IMR-90 (cell line): ENCODE measurements at regions of chr12 and their contacts with region 1.

Region 1: DNA sequence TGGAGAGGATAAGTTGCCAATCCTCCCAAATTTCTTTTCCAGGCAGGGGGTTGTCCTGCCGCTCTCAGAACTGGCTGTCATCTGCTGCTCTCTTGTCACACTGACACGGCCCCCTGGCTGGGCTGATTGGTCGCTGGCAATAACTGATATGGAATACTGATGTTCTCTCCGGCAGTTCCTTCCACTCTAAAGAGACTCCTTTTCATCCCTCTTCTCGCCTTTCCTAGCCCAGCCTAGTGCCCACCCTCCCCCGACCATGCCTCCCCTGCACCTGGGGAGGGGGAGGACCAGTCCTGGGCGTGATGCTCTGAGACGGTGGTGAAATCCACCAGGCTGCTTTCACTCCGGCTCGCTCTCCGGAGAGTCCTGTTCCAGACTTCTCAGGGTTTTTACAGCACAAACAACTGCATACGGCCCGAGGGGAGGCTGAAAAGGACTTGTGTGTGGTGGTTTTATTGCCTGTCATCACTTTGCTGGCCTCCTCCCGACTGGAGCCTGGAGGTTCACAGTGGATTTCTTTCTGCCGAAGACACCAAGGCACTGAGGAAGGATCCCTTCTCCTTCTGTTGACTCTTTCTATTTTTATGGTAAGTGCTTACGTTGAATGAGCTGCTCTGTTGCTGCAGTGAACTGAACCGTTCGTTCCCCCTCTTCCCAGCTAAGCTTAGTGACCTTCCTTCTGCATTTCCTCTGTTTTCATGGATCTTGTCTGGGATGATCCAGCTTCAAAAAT is at the start of gene ANO4:
- DNase-seq: peak; percentile 29
- ATAC-seq: peak; percentile 56
- H3K4me3 ChIP-seq: peak within 1 kb of the TSS; percentile 49
- H3K27ac ChIP-seq: peak within 1 kb of the TSS; percentile 95
- H3K4me1 ChIP-seq: peaks cover 11% of the 10 kb centered on the region
- H3K27me3 ChIP-seq: no peaks in the 10 kb centered on the region
- CTCF ChIP-seq: no peak
- POLR2A ChIP-seq: no peak
- RAD21 ChIP-seq: no peak
- total RNA-seq, gene ANO4: 7.2 and 10.2 TPM in 2 replicates

Region 2: GRCh38 chr12:100573292-100574186 is 221.1 kb before region 1 on chr12 and contains the start of gene GAS2L3:
- CTCF ChIA-PET with region 1: no interaction called
- POLR2A ChIA-PET with region 1: no interaction called
- dilution Hi-C with region 1: no loop called
- in situ Hi-C with region 1: no loop called
- intact Hi-C with region 1: no loop called
- DNase-seq: peak; percentile 79
- ATAC-seq: peak; percentile 96
- H3K4me3 ChIP-seq: peak within 1 kb of the TSS; percentile 85
- H3K27ac ChIP-seq: peak within 1 kb of the TSS; percentile 51; the same call in 1 of the 2 replicates
- H3K4me1 ChIP-seq: peaks cover 2% of the 10 kb centered on the region; the same call in 1 of the 2 replicates
- H3K27me3 ChIP-seq: no peaks in the 10 kb centered on the region
- CTCF ChIP-seq: no peak
- POLR2A ChIP-seq: peak; percentile 59; the same call in 1 of the 2 replicates
- RAD21 ChIP-seq: no peak
- total RNA-seq, gene GAS2L3: 15.6 and 27.2 TPM in 2 replicates

Region 3: GRCh38 chr12:100827901-100828520 is 33.4 kb after region 1 on chr12:
- CTCF ChIA-PET with region 1: no interaction called
- POLR2A ChIA-PET with region 1: no interaction called
- dilution Hi-C with region 1: no loop called
- in situ Hi-C with region 1: no loop called
- intact Hi-C with region 1: no loop called
- DNase-seq: peak; percentile 54
- ATAC-seq: peak; percentile 38; the same call in 1 of the 2 replicates
- H3K4me3 ChIP-seq: no peak overlapping the region
- H3K27ac ChIP-seq: no peak overlapping the region
- H3K4me1 ChIP-seq: no peaks in the 10 kb centered on the region
- H3K27me3 ChIP-seq: no peaks in the 10 kb centered on the region
- CTCF ChIP-seq: peak; percentile 78
- POLR2A ChIP-seq: no peak
- RAD21 ChIP-seq: peak; percentile 88

Region 4: DNA sequence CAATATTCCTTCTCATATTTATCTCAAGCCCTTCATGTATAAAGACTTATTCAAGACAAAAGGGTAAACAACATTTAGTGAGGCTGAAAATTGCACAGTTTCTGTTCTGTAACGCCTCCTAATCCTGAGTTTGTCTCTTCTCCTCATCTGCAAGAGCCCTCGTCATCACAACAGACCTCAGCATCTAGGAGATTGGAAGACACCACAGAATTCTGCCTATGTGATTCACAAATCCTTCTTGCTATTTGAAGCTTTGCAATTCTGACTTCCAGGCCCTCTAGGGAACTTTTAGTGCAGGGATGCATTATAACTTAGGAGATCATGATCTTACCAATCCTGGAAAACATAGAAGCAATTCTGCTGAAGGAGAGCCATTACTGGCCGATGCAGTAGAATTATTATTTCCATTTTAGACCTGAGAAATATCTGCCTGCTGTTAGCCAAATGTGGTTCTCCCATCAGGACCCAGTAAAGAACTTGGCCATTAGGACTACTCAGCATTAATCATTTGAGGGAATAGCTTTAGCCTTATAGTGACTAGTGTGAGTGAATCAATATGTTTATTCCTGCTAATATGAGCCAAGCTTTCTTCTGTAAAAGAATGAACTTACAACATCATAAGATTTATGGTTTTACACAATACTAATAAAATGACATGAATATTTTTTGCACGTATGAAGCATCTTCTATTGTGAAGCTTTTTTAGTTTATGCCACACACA is 119.4 kb after region 1 on chr12:
- CTCF ChIA-PET with region 1: no interaction called
- POLR2A ChIA-PET with region 1: no interaction called
- dilution Hi-C with region 1: no loop called
- in situ Hi-C with region 1: no loop called
- intact Hi-C with region 1: loop called (anchors 5 kb)
- DNase-seq: peak; percentile 37
- ATAC-seq: peak; percentile 61
- H3K4me3 ChIP-seq: no peak overlapping the region
- H3K27ac ChIP-seq: no peak overlapping the region
- H3K4me1 ChIP-seq: no peaks in the 10 kb centered on the region
- H3K27me3 ChIP-seq: no peaks in the 10 kb centered on the region
- CTCF ChIP-seq: no peak
- POLR2A ChIP-seq: no peak
- RAD21 ChIP-seq: no peak

Region 5: DNA sequence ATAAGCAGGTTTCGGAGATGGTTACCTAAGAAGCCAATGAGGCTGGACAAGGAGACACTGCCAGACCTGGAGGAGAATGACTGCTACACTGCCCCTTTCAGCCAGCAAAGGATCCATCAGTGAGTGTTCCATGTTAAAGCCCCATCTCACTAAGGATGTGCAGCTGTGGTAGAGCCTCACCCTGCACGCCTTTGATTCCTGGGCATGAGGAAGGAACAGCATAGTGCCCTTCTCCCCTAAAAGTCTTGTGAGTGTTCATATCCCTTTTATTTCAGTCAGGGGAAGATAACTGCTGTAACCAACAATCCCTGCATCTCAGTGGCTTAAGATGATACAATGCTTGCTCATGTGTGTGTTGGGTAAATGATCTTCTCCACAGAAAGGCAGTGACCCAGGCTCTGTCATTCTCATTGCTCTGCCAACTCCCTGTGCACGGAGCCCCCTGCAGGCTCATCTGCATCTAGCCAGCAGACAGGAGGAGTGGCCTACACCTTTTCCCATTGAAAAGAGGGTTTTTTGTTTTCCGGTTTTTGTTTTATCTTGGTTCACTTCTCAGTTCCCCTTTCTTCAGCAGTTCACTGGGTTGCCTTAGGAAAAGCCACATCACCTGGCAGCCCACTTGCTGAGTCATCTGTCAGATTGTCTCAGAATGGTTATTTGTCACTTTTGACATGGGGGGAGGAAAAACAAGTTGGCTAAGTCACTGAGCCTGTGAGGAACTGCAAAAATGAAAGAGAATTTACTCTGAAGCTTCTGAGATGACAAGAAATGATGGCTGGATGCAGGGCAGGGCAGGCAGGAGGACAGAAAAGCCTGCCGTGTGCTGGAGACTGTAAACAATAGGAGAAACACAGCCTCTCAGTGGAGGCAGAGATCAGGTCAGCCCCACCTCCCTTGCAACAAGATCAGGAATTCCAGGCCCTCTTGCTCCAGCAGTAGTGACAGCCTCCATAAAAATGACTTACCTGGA is 193.2 kb after region 1 on chr12:
- CTCF ChIA-PET with region 1: interaction called, 4 read pairs
- POLR2A ChIA-PET with region 1: no interaction called
- dilution Hi-C with region 1: no loop called
- in situ Hi-C with region 1: no loop called
- intact Hi-C with region 1: loop called (anchors 2 kb)
- DNase-seq: peak; percentile 70
- ATAC-seq: peak; percentile 77
- H3K4me3 ChIP-seq: no peak overlapping the region
- H3K27ac ChIP-seq: peak overlapping the region; percentile 76; the same call in 1 of the 2 replicates
- H3K4me1 ChIP-seq: peaks cover 11% of the 10 kb centered on the region
- H3K27me3 ChIP-seq: no peaks in the 10 kb centered on the region
- CTCF ChIP-seq: peak; percentile 55
- POLR2A ChIP-seq: no peak
- RAD21 ChIP-seq: peak; percentile 64

Region 6: GRCh38 chr12:101165319-101165718 is 370.7 kb after region 1 on chr12:
- CTCF ChIA-PET with region 1: no interaction called
- POLR2A ChIA-PET with region 1: no interaction called
- dilution Hi-C with region 1: no loop called
- in situ Hi-C with region 1: no loop called
- intact Hi-C with region 1: no loop called
- DNase-seq: no peak
- ATAC-seq: no peak
- H3K4me3 ChIP-seq: no peak overlapping the region
- H3K27ac ChIP-seq: no peak overlapping the region
- H3K4me1 ChIP-seq: no peaks in the 10 kb centered on the region
- H3K27me3 ChIP-seq: no peaks in the 10 kb centered on the region
- CTCF ChIP-seq: no peak
- POLR2A ChIP-seq: no peak
- RAD21 ChIP-seq: no peak